OCI-LY7 (cell line): ENCODE measurements at regions of chr3 and their contacts with region 1.

Region 1: GRCh38 chr3:43894176-43895049 is 203.7 kb downstream of the ABHD5 start:
- DNase-seq: peak; percentile 89
- H3K4me3 ChIP-seq: peak overlapping the region; percentile 60
- H3K27ac ChIP-seq: peak overlapping the region; percentile 97
- H3K4me1 ChIP-seq: peaks cover 60% of the 10 kb centered on the region
- CTCF ChIP-seq: no peak

Region 2: GRCh38 chr3:43649365-43649968 is 244.9 kb before region 1 on chr3:
- CTCF ChIA-PET with region 1: no interaction called
- POLR2A ChIA-PET with region 1: no interaction called
- intact Hi-C with region 1: no loop called
- DNase-seq: no peak
- H3K4me3 ChIP-seq: no peak overlapping the region
- H3K27ac ChIP-seq: no peak overlapping the region
- H3K4me1 ChIP-seq: no peaks in the 10 kb centered on the region
- CTCF ChIP-seq: no peak

Region 3: DNA sequence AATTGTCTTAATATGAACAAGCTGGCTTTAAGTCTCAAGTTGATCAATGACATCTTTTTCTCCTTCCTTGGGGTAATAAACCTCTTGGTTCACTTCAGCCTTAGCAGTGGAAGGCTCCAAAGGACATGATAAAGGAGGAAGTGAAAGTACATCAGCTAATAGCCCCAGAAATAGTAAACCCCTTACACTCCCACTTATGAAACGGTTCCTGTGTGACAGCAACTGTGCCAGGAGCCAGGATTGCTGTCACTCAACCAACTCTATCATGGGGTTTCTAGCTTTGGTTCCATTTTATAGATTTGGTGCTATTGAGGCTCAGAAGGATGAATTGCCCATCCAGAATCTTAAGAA is 13.1 kb after region 1 on chr3:
- CTCF ChIA-PET with region 1: interaction called, 4 read pairs
- POLR2A ChIA-PET with region 1: interaction called, 10 read pairs
- intact Hi-C with region 1: no loop called
- DNase-seq: peak; percentile 81
- H3K4me3 ChIP-seq: peak overlapping the region; percentile 29
- H3K27ac ChIP-seq: peak overlapping the region; percentile 61
- H3K4me1 ChIP-seq: peaks cover 41% of the 10 kb centered on the region
- CTCF ChIP-seq: no peak

Region 4: GRCh38 chr3:44045476-44046275 is 151.3 kb after region 1 on chr3:
- CTCF ChIA-PET with region 1: no interaction called
- POLR2A ChIA-PET with region 1: no interaction called
- intact Hi-C with region 1: loop called (anchors 5 kb)
- DNase-seq: peak; percentile 92
- H3K4me3 ChIP-seq: peak overlapping the region; percentile 13
- H3K27ac ChIP-seq: peak overlapping the region; percentile 40
- H3K4me1 ChIP-seq: peaks cover 30% of the 10 kb centered on the region
- CTCF ChIP-seq: no peak